ENCODE measurements at regions of chr11 and their contacts with region 1.

Region 1: DNA sequence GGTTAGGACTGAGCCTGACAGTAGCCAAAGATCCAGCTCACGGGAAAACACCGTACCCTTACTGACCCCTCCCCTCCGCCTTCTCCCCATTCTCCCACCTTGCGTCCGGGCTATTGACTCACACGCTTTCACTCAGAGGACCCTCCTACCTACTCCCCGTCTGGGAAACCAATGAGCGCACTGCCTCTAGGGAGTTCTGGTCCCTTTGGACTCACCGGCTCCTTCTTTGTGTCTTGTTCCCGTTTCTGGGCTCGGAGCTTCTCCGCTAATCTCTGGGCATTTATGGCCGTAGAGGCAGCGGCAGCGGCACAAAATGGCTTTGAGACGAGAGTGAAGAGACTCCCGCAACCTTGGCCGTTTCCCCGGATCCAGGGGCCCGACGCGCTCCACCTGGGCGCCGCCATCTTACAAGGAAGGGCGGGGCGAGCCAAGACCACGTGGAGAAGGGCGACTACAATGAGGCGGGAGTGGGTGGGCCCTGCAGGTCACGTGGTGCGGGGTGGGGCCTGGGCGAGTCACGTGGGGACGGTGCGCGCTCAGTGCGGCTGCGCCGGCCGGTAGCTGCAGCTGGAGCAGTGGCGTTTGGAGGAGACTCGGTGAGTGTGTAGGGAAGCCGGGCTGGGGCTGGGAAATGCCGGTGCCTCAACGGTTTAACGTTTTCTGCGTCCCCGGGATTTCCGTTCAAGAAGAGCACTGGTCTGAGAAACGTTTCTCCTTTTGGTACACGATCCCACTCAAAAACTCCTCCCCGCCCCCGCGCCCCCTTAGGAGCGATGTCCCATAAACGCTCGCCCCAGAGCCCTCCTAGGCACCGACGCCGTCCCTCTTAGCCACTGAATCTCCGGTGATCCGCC is at the starts of genes FAM118B and RPUSD4:
- DNase-seq: peak; percentile 96 to 99 (median 98)
- ATAC-seq: peak; percentile 99
- H3K4me3 ChIP-seq: peak within 1 kb of the TSS; percentile 100
- H3K4me3 Mint-ChIP-seq: peak within 1 kb of the TSS; percentile 93 to 100 (median 98)
- H3K27ac ChIP-seq: peak within 1 kb of the TSS; percentile 84
- H3K27ac Mint-ChIP-seq: peak within 1 kb of the TSS; percentile 90 to 99 (median 96)
- H3K4me1 ChIP-seq: peaks cover 12 to 15% of the 10 kb centered on the region in 2 donors
- H3K4me1 Mint-ChIP-seq: peaks cover 28 to 57% (median 38%) of the 10 kb centered on the region in 7 donors
- H3K27me3 ChIP-seq: no peaks in the 10 kb centered on the region
- H3K27me3 Mint-ChIP-seq: peaks cover 0 to 6% (median 0%) of the 10 kb centered on the region in 5 donors
- total RNA-seq, gene FAM118B: 4.0 to 10.9 (median 10.5) TPM
- total RNA-seq, gene RPUSD4: 30.1 to 49.6 (median 43.8) TPM

Region 2: GRCh38 chr11:124953753-124954589 is 1257.5 kb before region 1 on chr11 and contains the start of gene CCDC15:
- CTCF ChIA-PET with region 1: no interaction called
- POLR2A ChIA-PET with region 1: no interaction called
- intact Hi-C with region 1: loop called (anchors 2 to 5 kb)
- DNase-seq: peak; percentile 78 to 94 (median 92)
- ATAC-seq: peak; percentile 99
- H3K4me3 ChIP-seq: peak within 1 kb of the TSS; percentile 72
- H3K4me3 Mint-ChIP-seq: no peak within 1 kb of the TSS
- H3K27ac ChIP-seq: peak within 1 kb of the TSS; percentile 85
- H3K27ac Mint-ChIP-seq: no peak within 1 kb of the TSS
- H3K4me1 ChIP-seq: peaks cover 27 to 42% of the 10 kb centered on the region in 2 donors
- H3K4me1 Mint-ChIP-seq: peaks cover 0 to 7% (median 0%) of the 10 kb centered on the region in 7 donors
- H3K27me3 ChIP-seq: no peaks in the 10 kb centered on the region
- H3K27me3 Mint-ChIP-seq: no peaks in the 10 kb centered on the region
- total RNA-seq, gene CCDC15: 1.6 to 4.7 (median 2.7) TPM

Region 3: DNA sequence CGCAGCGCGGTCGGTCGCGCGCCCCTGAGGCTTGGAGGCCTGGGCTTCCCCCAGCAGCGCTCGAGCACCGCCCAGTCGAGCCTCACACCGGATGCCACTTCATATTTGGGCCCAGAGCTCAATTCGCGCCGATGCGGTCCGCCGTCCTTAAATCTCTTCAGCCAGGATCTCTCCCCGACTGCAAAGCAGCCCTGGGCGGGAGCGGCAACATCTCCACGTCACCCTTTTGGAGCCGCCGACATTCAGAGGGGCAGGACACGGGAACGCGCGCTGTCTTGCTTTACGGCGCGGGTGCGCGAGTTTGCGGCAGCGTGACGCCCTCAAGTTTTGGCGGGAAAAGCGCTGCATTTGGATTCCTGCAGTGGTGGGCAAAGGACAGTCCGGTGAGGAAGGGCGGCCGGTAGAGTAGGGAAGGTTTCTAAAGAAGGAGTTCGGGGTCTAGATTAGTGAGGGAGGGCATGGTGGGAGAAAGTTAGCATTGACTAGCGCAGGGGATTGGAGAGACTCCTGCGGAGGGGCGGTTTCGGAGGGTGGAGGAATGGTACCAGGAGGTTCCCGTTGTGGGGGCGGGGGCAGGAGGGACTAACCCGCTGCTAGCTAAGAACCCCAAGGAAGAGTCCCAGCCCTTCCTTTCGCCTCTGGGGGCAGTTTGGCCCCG is 585.7 kb before region 1 on chr11:
- CTCF ChIA-PET with region 1: no interaction called
- POLR2A ChIA-PET with region 1: no interaction called
- intact Hi-C with region 1: loop called (anchors 1 to 2 kb)
- DNase-seq: peak; percentile 70 to 87 (median 82)
- ATAC-seq: peak; percentile 95
- H3K4me3 ChIP-seq: peak overlapping the region; percentile 91
- H3K4me3 Mint-ChIP-seq: peak overlapping the region; percentile 82 to 99 (median 98)
- H3K27ac ChIP-seq: peak overlapping the region; percentile 96
- H3K27ac Mint-ChIP-seq: peak overlapping the region; percentile 64 to 99 (median 98)
- H3K4me1 ChIP-seq: peaks cover 0 to 5% of the 10 kb centered on the region in 2 donors
- H3K4me1 Mint-ChIP-seq: peaks cover 13 to 47% (median 15%) of the 10 kb centered on the region in 7 donors
- H3K27me3 ChIP-seq: no peaks in the 10 kb centered on the region
- H3K27me3 Mint-ChIP-seq: no peaks in the 10 kb centered on the region

Region 4: GRCh38 chr11:126194121-126194543 is 17.3 kb before region 1 on chr11:
- CTCF ChIA-PET with region 1: interaction called, 3 read pairs
- POLR2A ChIA-PET with region 1: no interaction called
- intact Hi-C with region 1: loop called in 1 of 2 experiments (anchors 2 kb)
- DNase-seq: peak in 5 of 9 donors; percentile 22 to 43 (median 29)
- ATAC-seq: no peak
- H3K4me3 ChIP-seq: no peak overlapping the region
- H3K4me3 Mint-ChIP-seq: no peak overlapping the region
- H3K27ac ChIP-seq: no peak overlapping the region
- H3K27ac Mint-ChIP-seq: peak overlapping the region in 1 of 9 donors; percentile 52
- H3K4me1 ChIP-seq: no peaks in the 10 kb centered on the region
- H3K4me1 Mint-ChIP-seq: peaks cover 0 to 2% (median 0%) of the 10 kb centered on the region in 7 donors
- H3K27me3 ChIP-seq: no peaks in the 10 kb centered on the region
- H3K27me3 Mint-ChIP-seq: no peaks in the 10 kb centered on the region

Region 5: DNA sequence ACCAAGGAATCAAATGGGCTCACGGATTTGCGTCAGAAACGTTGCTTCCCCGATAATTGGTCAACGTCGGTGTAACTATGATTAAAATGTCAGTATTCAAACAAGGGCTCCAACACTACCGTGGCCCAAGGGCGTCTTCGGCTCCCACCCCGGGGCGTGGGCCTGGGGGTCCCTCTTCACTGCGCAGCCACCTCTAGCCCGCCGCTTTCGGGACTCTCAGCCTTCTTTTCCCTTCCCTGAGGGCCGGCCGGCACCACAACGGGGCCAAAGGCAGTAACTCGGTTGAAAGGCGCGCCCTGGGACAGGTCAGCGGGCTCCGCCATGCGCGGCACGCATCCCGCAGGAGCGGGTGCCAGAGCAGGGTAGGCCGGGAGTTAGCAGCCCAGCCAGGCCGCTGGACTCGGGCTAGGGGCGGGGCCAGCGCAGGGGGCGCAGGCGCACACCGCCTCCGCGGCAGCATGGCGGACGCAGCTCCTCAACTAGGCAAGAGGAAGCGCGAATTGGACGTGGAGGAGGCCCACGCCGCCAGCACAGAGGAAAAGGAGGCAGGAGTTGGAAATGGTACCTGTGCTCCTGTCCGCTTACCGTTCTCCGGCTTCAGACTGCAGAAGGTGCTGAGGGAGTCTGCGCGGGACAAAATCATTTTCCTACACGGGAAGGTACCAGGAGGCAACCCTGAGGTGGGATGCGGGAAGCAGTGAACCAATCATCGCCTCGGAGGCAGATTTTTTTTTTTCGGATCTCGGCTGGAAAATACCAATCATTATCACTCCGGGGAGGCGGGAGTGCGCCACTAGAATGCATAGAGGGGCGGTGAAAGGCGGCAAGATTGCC is 92.4 kb after region 1 on chr11 and contains the start of gene DCPS:
- CTCF ChIA-PET with region 1: interaction called, 3 read pairs
- POLR2A ChIA-PET with region 1: no interaction called
- intact Hi-C with region 1: loop called (anchors 1 to 5 kb)
- DNase-seq: peak; percentile 78 to 94 (median 86)
- ATAC-seq: peak; percentile 99
- H3K4me3 ChIP-seq: peak within 1 kb of the TSS; percentile 100
- H3K4me3 Mint-ChIP-seq: peak within 1 kb of the TSS; percentile 91 to 99 (median 97)
- H3K27ac ChIP-seq: peak within 1 kb of the TSS; percentile 97
- H3K27ac Mint-ChIP-seq: peak within 1 kb of the TSS; percentile 87 to 99 (median 96)
- H3K4me1 ChIP-seq: peaks cover 18 to 20% of the 10 kb centered on the region in 2 donors
- H3K4me1 Mint-ChIP-seq: peaks cover 19 to 50% (median 45%) of the 10 kb centered on the region in 7 donors
- H3K27me3 ChIP-seq: no peaks in the 10 kb centered on the region
- H3K27me3 Mint-ChIP-seq: no peaks in the 10 kb centered on the region
- total RNA-seq, gene DCPS: 11.0 to 37.2 (median 17.4) TPM